SK-N-SH (cell line): ENCODE measurements at regions of chr5 and their contacts with region 1.

Region 1: DNA sequence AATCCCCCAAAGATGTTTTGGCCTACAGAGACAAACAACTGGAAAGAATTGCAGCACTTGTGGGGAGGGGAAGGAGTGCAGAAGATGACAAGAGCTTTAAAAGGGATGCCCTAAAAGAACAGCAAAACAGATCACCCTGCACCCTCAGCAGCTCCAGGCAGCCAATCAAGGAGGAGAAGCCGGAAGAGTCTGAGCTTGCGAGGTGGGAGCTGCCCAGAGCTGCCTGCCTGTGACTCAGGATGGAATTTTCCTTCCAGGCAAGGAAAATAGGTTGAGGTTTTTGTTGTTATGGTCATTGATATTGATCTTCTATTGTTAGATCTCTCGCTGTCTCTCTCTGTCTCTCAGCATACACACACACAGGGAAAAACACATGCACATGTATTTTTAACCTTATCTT is 70.3 kb upstream of the MAP1B start:
- DNase-seq: no peak
- H3K4me3 ChIP-seq: no peak overlapping the region
- H3K27ac ChIP-seq: peak overlapping the region in 1 of 2 experiments; percentile 37; a peak in 1 of 4 replicates
- H3K4me1 ChIP-seq: peaks cover 0 to 5% of the 10 kb centered on the region in 2 experiments; a peak in 1 of 4 replicates
- H3K27me3 ChIP-seq: no peaks in the 10 kb centered on the region
- CTCF ChIP-seq: no peak
- EP300 ChIP-seq: no peak
- RAD21 ChIP-seq: no peak

Region 2: GRCh38 chr5:72018146-72018803 is 18.7 kb before region 1 on chr5:
- CTCF ChIA-PET with region 1: interaction called, 10 read pairs
- POLR2A ChIA-PET with region 1: no interaction called
- DNase-seq: peak; percentile 39
- H3K4me3 ChIP-seq: no peak overlapping the region; a peak in 1 of 4 replicates
- H3K27ac ChIP-seq: no peak overlapping the region
- H3K4me1 ChIP-seq: peaks cover 0 to 17% of the 10 kb centered on the region in 2 experiments; a peak in 1 of 4 replicates
- H3K27me3 ChIP-seq: no peaks in the 10 kb centered on the region
- CTCF ChIP-seq: peak; percentile 77
- EP300 ChIP-seq: no peak
- RAD21 ChIP-seq: peak; percentile 55